Left ventricle myocardium superior (tissue), 1 donor: ENCODE measurements at regions of chr3 and their contacts with region 1.

Region 1: DNA sequence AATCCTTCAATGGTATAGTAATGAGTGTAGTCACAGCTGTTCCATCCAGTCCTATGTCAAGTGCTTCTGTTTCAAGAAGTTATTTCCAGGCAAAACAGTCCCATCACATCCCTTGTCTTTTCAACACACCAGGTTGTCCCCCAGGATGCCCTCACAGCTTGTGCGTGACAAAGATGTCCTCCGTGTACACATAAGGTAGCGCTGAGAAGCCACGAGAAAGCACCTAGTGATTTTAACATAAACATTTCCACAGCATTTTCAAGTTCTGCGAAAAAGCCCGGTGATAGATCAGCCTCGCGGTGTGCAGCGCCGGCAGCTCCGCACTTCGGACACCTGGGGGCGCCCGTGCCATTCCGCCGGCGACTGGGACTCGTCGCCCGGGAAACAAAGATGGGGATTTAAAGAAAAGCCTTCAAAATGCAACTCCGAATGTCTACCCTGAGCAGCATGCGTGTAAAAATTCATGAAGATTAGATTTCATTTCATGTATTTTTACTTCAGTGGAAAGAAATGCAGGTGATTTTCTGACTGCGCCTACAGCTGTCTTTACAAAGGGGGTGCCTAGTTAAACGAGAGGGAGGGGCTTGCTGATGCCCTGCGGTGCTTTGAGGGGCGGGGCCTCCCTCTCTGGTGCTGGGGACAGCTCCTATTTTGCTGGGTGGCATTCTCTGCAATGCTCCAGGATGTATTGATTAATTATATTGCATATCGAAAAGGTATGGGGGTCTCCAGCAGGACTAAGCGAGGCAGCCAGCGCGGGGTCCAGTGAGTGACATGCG is 49.9 kb downstream of the KY start:
- DNase-seq: peak; percentile 77
- ATAC-seq: peak; percentile 81

Region 2: GRCh38 chr3:135895106-135895733 is 1294.3 kb after region 1 on chr3:
- intact Hi-C with region 1: loop called (anchors 5 kb)
- DNase-seq: peak; percentile 81
- ATAC-seq: peak; percentile 52

Region 3: GRCh38 chr3:136042608-136043221 is 1441.8 kb after region 1 on chr3:
- intact Hi-C with region 1: loop called (anchors 10 kb)
- DNase-seq: no peak
- ATAC-seq: peak; percentile 38